ENCODE measurements at regions of chr12 and their contacts with region 1.

Region 1: DNA sequence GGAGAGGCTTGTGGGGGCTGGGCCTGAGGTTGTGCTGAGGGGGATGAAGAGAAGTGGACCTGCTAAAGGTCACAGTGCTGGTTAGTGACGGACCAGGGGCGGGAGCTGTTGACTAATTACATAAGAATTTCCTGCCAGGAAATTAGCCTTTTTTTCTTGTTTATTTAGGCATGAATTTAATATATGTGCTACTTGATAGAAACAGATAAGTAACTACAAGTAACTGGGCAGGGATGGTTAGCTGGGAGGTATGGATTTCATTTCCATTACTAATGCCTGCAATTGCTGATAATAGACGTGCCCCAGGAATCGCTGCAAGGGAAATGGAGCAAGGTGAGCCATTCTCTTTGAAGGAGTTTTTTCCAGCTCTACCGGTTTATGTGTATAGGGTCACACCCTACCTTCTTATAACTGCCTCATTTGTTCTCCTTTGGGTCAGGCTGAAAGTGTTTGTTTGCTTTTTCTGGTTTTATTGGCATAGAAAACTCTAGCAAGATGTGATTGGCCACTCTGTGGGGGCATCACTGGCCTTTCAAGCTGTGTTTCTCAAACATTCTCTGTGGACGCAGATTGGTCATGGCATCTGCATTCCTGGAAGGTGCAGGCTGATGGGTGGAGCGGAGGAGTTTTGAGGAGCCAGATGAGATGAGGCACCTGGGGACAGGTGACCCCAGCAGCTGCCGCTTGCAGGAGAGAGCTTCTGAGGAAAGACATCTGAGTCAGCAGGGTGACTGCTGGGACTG is 19.1 kb upstream of the GPRC5A start:
- DNase-seq: peak; percentile 94 to 98
- H3K4me3 ChIP-seq: no peak overlapping the region
- H3K4me3 Mint-ChIP-seq: peak overlapping the region; percentile 60
- H3K27ac Mint-ChIP-seq: peak overlapping the region; percentile 97
- H3K4me1 ChIP-seq: peaks cover 70% of the 10 kb centered on the region
- H3K4me1 Mint-ChIP-seq: peaks cover 75% of the 10 kb centered on the region
- H3K27me3 ChIP-seq: no peaks in the 10 kb centered on the region
- H3K27me3 Mint-ChIP-seq: no peaks in the 10 kb centered on the region
- CTCF ChIP-seq: no peak

Region 2: GRCh38 chr12:12813120-12814101 is 58.9 kb before region 1 on chr12 and contains the start of gene DDX47:
- CTCF ChIA-PET with region 1: no interaction called
- POLR2A ChIA-PET with region 1: interaction called, 5 read pairs
- intact Hi-C with region 1: loop called (anchors 1 kb)
- DNase-seq: peak; percentile 97 to 99
- H3K4me3 ChIP-seq: peak within 1 kb of the TSS; percentile 78
- H3K4me3 Mint-ChIP-seq: peak within 1 kb of the TSS; percentile 96
- H3K27ac Mint-ChIP-seq: peak within 1 kb of the TSS; percentile 95
- H3K4me1 ChIP-seq: peaks cover 52% of the 10 kb centered on the region
- H3K4me1 Mint-ChIP-seq: peaks cover 39% of the 10 kb centered on the region
- H3K27me3 ChIP-seq: no peaks in the 10 kb centered on the region
- H3K27me3 Mint-ChIP-seq: no peaks in the 10 kb centered on the region
- CTCF ChIP-seq: peak; percentile 99
- total RNA-seq, gene DDX47: 121 and 138 TPM in 2 replicates

Region 3: DNA sequence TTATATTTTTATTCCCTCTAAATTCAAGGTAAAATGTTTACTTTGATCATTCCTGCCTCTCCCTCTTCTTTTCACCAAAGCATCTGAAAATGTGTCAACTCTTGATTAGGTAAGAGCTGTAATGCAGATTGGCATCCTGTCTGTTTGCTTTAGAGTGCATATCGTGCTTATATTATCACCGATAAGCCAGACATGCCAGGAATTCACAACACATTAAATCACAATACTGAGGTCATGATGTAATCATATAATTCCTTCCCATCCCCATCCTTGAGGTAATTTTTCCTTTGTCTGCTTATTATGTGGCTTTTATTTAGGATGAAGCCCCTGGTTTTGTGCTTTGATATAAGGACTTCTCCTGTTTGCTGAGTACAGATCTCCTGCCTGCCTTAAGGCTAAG is 49.0 kb before region 1 on chr12:
- CTCF ChIA-PET with region 1: no interaction called
- POLR2A ChIA-PET with region 1: no interaction called
- intact Hi-C with region 1: loop called (anchors 1 kb)
- DNase-seq: peak in 1 of 2 experiments; percentile 45
- H3K4me3 ChIP-seq: no peak overlapping the region
- H3K4me3 Mint-ChIP-seq: no peak overlapping the region
- H3K27ac Mint-ChIP-seq: peak overlapping the region; percentile 47
- H3K4me1 ChIP-seq: peaks cover 70% of the 10 kb centered on the region
- H3K4me1 Mint-ChIP-seq: peaks cover 44% of the 10 kb centered on the region
- H3K27me3 ChIP-seq: no peaks in the 10 kb centered on the region
- H3K27me3 Mint-ChIP-seq: no peaks in the 10 kb centered on the region
- CTCF ChIP-seq: no peak

Region 4: DNA sequence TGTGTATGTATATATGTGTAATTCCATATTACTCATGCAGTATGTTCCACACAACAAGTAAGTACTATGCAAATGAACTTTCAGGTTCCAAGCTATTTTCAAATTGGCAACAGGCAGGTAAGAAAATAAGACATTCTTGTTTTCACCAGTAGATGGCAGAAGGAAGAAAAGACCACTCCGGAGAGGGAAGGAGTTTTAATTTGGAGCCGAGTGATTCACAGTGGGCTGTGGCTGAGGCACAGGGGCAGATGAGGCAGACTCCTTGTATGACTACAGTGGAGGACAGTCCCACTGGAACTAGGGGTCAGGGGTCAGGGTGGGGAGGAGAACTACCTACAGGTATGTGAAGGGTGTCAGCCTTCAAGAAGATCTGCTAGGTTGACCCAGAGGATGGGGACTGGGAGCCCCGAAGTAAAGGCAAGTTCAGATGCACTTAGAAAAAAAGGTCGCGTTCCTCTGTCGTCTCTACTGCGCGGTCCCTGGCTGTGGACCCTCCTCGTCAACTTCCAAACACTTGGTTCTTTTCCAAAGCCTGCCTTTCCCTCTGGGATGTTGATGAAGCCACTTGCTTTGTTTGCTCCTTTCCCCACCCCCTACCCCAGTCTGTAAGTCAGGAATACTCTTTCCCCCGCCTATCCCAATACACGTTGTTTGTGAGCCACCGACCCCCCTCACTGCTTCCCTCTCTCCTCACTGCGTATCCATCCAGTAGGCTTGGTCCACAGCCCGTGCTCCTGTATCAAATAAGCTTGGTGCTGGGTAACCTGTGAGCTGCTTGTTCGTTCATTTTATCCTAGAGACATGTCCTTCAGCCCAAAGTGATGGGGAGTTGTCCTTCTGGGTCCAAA is 35.1 kb before region 1 on chr12:
- CTCF ChIA-PET with region 1: interaction called, 21 read pairs
- POLR2A ChIA-PET with region 1: interaction called, 15 read pairs
- intact Hi-C with region 1: loop called (anchors 1 kb)
- DNase-seq: peak; percentile 76 to 78
- H3K4me3 ChIP-seq: no peak overlapping the region
- H3K4me3 Mint-ChIP-seq: peak overlapping the region; percentile 0
- H3K27ac Mint-ChIP-seq: peak overlapping the region; percentile 46
- H3K4me1 ChIP-seq: peaks cover 45% of the 10 kb centered on the region
- H3K4me1 Mint-ChIP-seq: peaks cover 50% of the 10 kb centered on the region
- H3K27me3 ChIP-seq: no peaks in the 10 kb centered on the region
- H3K27me3 Mint-ChIP-seq: no peaks in the 10 kb centered on the region
- CTCF ChIP-seq: peak; percentile 73 to 85

Region 5: GRCh38 chr12:12859690-12860089 is 12.6 kb before region 1 on chr12:
- CTCF ChIA-PET with region 1: no interaction called
- POLR2A ChIA-PET with region 1: no interaction called
- intact Hi-C with region 1: no loop called
- DNase-seq: no peak
- H3K4me3 ChIP-seq: no peak overlapping the region
- H3K4me3 Mint-ChIP-seq: no peak overlapping the region
- H3K27ac Mint-ChIP-seq: no peak overlapping the region
- H3K4me1 ChIP-seq: no peaks in the 10 kb centered on the region
- H3K4me1 Mint-ChIP-seq: no peaks in the 10 kb centered on the region
- H3K27me3 ChIP-seq: no peaks in the 10 kb centered on the region
- H3K27me3 Mint-ChIP-seq: no peaks in the 10 kb centered on the region
- CTCF ChIP-seq: no peak

Region 6: DNA sequence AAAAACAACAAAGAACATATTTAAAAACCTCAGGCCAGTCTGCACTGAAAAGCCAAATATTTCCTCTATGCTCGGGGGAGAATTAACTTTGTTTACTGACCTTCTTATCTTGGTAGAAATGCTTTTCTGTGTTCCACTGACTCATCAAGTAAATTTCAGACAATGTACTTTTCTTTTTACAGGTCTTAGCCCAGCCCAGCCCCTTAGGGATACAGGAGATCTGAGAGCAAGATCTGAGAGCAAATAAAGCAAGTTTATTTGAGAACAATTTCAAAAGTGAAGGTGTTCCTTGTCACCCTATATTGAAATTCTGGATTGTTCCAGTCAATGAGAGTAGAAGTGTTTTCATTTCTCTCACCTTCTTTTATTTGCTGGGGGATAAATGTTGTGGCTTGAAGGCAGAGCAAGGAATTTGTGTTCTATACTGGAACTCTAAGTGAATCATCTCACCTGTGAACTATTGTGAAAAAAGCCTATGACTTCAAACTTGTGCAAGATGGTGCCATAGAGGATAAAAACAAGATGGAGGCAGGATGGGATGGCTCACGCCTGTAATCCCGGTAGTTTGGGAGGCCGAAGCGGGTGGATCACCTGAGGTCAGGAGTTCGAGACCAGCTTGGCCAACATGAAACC is 11.2 kb after region 1 on chr12:
- CTCF ChIA-PET with region 1: interaction called, 7 read pairs
- POLR2A ChIA-PET with region 1: interaction called, 7 read pairs
- intact Hi-C with region 1: loop called (anchors 1 kb)
- DNase-seq: peak; percentile 88 to 90
- H3K4me3 ChIP-seq: no peak overlapping the region
- H3K4me3 Mint-ChIP-seq: peak overlapping the region; percentile 70
- H3K27ac Mint-ChIP-seq: peak overlapping the region; percentile 88
- H3K4me1 ChIP-seq: peaks cover 61% of the 10 kb centered on the region
- H3K4me1 Mint-ChIP-seq: peaks cover 80% of the 10 kb centered on the region
- H3K27me3 ChIP-seq: no peaks in the 10 kb centered on the region
- H3K27me3 Mint-ChIP-seq: no peaks in the 10 kb centered on the region
- CTCF ChIP-seq: no peak

Region 7: DNA sequence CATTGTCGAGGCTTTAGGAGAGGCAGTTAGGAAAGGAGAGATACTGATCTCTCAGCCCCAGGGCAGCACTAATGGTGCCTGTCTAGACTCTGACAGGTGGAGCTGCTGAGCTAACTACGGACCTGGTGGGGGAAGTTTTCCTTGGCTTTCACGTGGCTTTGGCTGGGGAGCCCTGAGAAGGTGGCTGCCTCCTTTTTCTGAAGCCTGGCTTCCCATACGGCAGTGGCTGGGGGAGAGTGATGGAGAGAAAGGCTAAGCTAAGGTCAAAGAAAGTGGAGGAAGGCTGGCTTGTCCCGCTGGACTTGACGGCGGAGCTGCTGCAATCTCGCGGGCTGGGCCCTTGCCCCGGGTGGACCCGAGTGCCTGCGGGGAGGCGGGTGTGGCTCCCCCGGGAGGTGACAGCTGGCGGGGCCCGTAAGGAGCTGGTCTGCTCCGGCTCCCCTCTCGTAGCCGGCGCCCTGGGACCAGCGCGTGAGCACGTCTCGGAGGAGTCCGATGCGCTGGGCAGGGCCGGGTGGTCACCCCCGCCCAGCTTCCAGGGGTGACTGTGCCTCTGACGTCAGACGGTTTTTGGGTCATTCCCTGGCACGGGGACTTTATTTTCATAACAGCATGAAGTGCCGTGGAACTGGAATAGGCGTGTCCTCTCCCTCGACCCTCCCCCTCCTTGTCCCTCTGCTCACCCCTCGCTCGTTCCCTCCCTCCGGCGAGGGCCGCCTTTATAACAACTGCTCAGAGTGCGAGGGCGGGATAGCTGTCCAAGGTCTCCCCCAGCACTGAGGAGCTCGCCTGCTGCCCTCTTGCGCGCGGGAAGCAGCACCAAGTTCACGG is 18.7 kb after region 1 on chr12 and contains the start of gene GPRC5A:
- CTCF ChIA-PET with region 1: interaction called, 14 read pairs
- POLR2A ChIA-PET with region 1: interaction called, 31 read pairs
- intact Hi-C with region 1: loop called (anchors 1 kb)
- DNase-seq: peak; percentile 93 to 95
- H3K4me3 ChIP-seq: peak within 1 kb of the TSS; percentile 56
- H3K4me3 Mint-ChIP-seq: peak within 1 kb of the TSS; percentile 83
- H3K27ac Mint-ChIP-seq: peak within 1 kb of the TSS; percentile 96
- H3K4me1 ChIP-seq: peaks cover 31% of the 10 kb centered on the region
- H3K4me1 Mint-ChIP-seq: peaks cover 53% of the 10 kb centered on the region
- H3K27me3 ChIP-seq: no peaks in the 10 kb centered on the region
- H3K27me3 Mint-ChIP-seq: no peaks in the 10 kb centered on the region
- CTCF ChIP-seq: peak in 1 of 2 experiments; percentile 36
- total RNA-seq, gene GPRC5A: 73.9 and 99.7 TPM in 2 replicates

Region 8: DNA sequence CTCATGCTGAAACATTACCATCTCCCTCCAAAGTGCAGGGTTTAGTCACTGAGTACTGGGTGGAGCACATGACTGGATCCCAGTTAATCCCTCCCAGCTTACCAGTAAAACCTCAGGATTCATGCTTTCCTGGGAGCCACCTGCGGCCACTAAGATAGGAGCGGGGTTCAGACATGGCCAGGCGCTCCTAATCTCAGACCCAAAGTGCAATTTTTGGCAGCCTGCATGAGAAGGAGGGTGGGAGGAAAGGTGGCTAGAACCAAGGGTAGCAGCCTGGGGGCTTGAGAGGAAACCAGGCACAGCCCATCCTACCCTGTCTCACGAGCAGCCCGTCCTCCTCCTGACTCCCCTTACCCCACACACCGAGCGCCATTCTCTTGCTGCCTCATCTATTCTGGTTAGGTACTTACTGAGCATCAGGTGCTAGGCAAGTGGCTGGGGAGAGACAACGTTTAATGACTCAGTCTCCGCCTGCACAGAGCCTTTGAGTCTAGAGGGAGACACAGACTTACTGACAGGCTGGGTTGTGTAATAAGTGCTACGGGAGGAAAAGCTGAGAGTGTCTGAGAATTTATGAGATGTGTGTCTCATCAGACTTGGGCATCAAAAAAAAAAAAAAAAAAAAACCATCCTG is 29.0 kb after region 1 on chr12:
- CTCF ChIA-PET with region 1: no interaction called
- POLR2A ChIA-PET with region 1: interaction called, 4 read pairs
- intact Hi-C with region 1: loop called (anchors 1 kb)
- DNase-seq: peak in 1 of 2 experiments; percentile 58
- H3K4me3 ChIP-seq: no peak overlapping the region
- H3K4me3 Mint-ChIP-seq: no peak overlapping the region
- H3K27ac Mint-ChIP-seq: peak overlapping the region; percentile 34
- H3K4me1 ChIP-seq: peaks cover 60% of the 10 kb centered on the region
- H3K4me1 Mint-ChIP-seq: peaks cover 60% of the 10 kb centered on the region
- H3K27me3 ChIP-seq: no peaks in the 10 kb centered on the region
- H3K27me3 Mint-ChIP-seq: no peaks in the 10 kb centered on the region
- CTCF ChIP-seq: no peak

Measured in Caco-2 (cell line).